ENCODE measurements at regions of chr2 and their contacts with region 1.

Region 1: DNA sequence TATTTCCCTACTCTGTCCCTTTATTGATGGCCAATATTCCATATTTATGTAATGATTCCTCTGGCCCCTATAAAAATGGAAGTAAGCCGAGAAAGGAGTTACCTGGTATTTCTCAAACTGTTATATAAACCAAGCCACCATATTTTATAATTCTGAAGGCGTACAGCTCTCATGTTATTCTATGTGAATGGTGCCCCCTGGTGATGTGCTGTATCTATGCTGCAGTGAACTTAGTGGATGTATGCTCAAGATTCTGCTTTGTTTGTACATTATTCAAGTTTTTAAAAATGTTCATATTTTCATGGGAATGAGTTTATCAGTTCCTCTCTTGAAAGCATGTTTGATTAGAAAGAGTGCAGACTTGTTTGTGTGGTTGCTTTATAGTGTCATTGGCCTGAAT is 194.5 kb upstream of the LRRTM1 start:
- DNase-seq: no peak
- ATAC-seq: peak; percentile 77
- H3K4me3 ChIP-seq: no peak overlapping the region
- H3K27ac ChIP-seq: no peak overlapping the region
- H3K4me1 ChIP-seq: no peaks in the 10 kb centered on the region
- H3K27me3 ChIP-seq: no peaks in the 10 kb centered on the region
- CTCF ChIP-seq: peak; percentile 55 to 79 (median 67)
- EP300 ChIP-seq: no peak
- POLR2A ChIP-seq: no peak
- RAD21 ChIP-seq: peak; percentile 80

Region 2: GRCh38 chr2:80073134-80073561 is 425.9 kb before region 1 on chr2:
- CTCF ChIA-PET with region 1: interaction called, 20 read pairs
- POLR2A ChIA-PET with region 1: no interaction called
- RAD21 ChIA-PET with region 1: interaction called, 9 read pairs
- SMC1A ChIA-PET with region 1: interaction called, 5 read pairs
- in situ Hi-C with region 1: no loop called
- intact Hi-C with region 1: loop called (anchors 1 kb)
- DNase-seq: peak; percentile 3
- ATAC-seq: peak; percentile 90
- H3K4me3 ChIP-seq: no peak overlapping the region
- H3K27ac ChIP-seq: no peak overlapping the region
- H3K4me1 ChIP-seq: no peaks in the 10 kb centered on the region
- H3K27me3 ChIP-seq: no peaks in the 10 kb centered on the region
- CTCF ChIP-seq: peak; percentile 57 to 70 (median 64); a peak in 5 of 6 replicates
- EP300 ChIP-seq: no peak
- POLR2A ChIP-seq: no peak
- RAD21 ChIP-seq: peak; percentile 70

Region 3: GRCh38 chr2:80288576-80288975 is 210.5 kb before region 1 on chr2:
- CTCF ChIA-PET with region 1: interaction called, 10 read pairs
- POLR2A ChIA-PET with region 1: no interaction called
- RAD21 ChIA-PET with region 1: interaction called, 5 read pairs
- SMC1A ChIA-PET with region 1: interaction called, 6 read pairs
- in situ Hi-C with region 1: no loop called
- intact Hi-C with region 1: no loop called
- DNase-seq: no peak
- ATAC-seq: no peak; the same call in 2 of the 3 replicates
- H3K4me3 ChIP-seq: no peak overlapping the region
- H3K27ac ChIP-seq: no peak overlapping the region
- H3K4me1 ChIP-seq: no peaks in the 10 kb centered on the region
- H3K27me3 ChIP-seq: no peaks in the 10 kb centered on the region
- CTCF ChIP-seq: peak in 1 of 3 experiments; percentile 31; a peak in 1 of 6 replicates
- EP300 ChIP-seq: no peak
- POLR2A ChIP-seq: no peak
- RAD21 ChIP-seq: peak; percentile 38

Region 4: DNA sequence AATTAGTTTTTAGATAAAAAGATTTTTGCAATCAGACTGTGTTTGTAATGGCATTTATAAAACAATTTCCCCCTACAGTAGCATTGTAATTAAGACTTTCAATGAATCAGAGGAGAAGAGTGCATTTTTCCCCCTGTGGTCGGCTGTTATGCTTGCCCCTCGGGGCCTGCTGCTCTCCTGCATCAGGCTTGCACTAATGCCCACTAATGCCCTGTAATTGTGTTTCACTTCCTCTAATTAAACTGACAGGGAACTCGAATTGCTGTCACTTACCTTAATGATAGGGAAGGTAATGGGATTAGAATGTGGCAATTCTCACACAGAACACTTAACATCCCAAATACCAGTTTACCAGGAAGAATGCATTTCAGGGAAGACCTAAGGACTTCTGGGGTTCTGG is 133.3 kb before region 1 on chr2:
- CTCF ChIA-PET with region 1: interaction called, 4 read pairs
- POLR2A ChIA-PET with region 1: interaction called, 4 read pairs
- RAD21 ChIA-PET with region 1: interaction called, 3 read pairs
- SMC1A ChIA-PET with region 1: interaction called, 13 read pairs
- in situ Hi-C with region 1: no loop called
- intact Hi-C with region 1: no loop called
- DNase-seq: no peak
- ATAC-seq: peak; percentile 89
- H3K4me3 ChIP-seq: no peak overlapping the region
- H3K27ac ChIP-seq: no peak overlapping the region
- H3K4me1 ChIP-seq: no peaks in the 10 kb centered on the region
- H3K27me3 ChIP-seq: no peaks in the 10 kb centered on the region
- CTCF ChIP-seq: no peak
- EP300 ChIP-seq: peak in 1 of 2 experiments; percentile 48; a peak in 1 of 4 replicates
- POLR2A ChIP-seq: no peak
- RAD21 ChIP-seq: no peak

Region 5: DNA sequence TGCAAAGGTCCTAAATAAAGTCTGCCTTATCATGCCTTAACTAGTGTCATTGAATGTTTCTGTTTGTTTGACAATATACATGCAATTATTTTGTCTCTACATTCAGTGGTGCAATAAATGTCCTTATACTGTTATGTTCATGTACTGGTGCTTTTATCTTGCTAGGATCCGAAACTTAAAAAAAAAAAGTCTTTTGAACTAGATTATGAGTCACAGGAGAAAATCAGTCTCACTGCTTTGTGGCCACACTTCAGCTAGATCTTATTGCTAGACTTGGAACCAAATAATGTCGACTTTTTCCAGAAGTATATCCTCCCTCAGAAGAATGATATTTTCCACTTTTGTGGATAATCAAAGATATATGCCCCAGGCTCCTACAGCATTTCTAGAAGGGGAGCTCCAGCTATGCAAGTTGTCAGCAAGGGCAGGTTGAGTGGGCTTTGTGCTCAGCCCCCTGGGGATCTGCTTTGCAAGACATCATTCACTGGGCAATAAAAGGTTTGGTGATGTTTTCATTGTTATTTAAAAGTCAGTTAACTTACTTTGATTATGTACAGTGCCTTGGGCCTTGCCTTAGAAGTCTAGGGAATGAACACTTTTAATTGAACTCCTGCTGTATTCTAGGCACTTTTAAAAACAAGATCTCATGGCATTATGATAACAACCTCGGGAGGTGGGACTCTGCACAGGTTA is 37.4 kb before region 1 on chr2:
- CTCF ChIA-PET with region 1: interaction called, 228 read pairs
- POLR2A ChIA-PET with region 1: interaction called, 319 read pairs
- RAD21 ChIA-PET with region 1: interaction called, 556 read pairs
- SMC1A ChIA-PET with region 1: interaction called, 559 read pairs
- in situ Hi-C with region 1: no loop called
- intact Hi-C with region 1: loop called (anchors 2 kb)
- DNase-seq: no peak
- ATAC-seq: peak; percentile 61
- H3K4me3 ChIP-seq: no peak overlapping the region; the same call in 1 of the 2 replicates
- H3K27ac ChIP-seq: 0 out of 2 replicates have a peak overlapping the region, but pooled peaks have one; percentile 4
- H3K4me1 ChIP-seq: peaks cover 3% of the 10 kb centered on the region; the same call in 1 of the 2 replicates
- H3K27me3 ChIP-seq: no peaks in the 10 kb centered on the region; a peak in 1 of 4 replicates
- CTCF ChIP-seq: no peak
- EP300 ChIP-seq: no peak
- POLR2A ChIP-seq: no peak
- RAD21 ChIP-seq: no peak

Region 6: DNA sequence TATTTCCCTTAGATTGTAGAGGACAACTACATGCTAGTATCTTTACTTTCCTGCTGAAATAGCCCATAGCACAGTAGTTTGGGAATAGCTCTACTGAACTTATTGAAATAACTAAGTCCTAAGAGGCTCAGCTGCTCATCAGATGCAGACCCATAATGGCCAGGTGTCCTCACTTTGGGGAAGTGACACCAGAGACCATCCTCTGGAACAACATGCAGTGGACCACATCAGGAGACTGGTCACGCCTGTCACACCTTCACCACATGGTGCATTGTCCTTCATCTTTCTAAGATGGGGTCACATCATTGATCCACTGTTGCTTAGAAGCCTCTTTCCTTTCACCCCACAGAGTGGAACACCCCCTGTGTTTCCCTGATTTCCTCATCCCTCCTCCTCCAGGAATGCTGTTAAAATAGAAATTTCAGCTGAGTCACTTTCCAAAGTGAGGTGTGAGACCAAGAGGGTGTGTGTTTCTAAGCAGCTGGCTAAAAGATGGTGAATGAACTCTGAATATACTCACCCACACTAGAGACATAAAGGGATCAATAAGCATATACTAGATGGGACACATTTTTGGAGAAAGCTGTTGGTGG is 20.7 kb after region 1 on chr2:
- CTCF ChIA-PET with region 1: interaction called, 243 read pairs
- POLR2A ChIA-PET with region 1: interaction called, 36 read pairs
- RAD21 ChIA-PET with region 1: interaction called, 276 read pairs
- SMC1A ChIA-PET with region 1: interaction called, 360 read pairs
- in situ Hi-C with region 1: no loop called
- intact Hi-C with region 1: no loop called
- DNase-seq: no peak
- ATAC-seq: peak; percentile 68
- H3K4me3 ChIP-seq: no peak overlapping the region
- H3K27ac ChIP-seq: no peak overlapping the region
- H3K4me1 ChIP-seq: peaks cover 17% of the 10 kb centered on the region
- H3K27me3 ChIP-seq: no peaks in the 10 kb centered on the region
- CTCF ChIP-seq: no peak
- EP300 ChIP-seq: 0 out of 4 replicates have a peak, but pooled peaks of 1 of the 2 experiments have one; percentile 10
- POLR2A ChIP-seq: no peak
- RAD21 ChIP-seq: no peak